ENCODE measurements at regions of chr3 and their contacts with region 1.

Region 1: GRCh38 chr3:127959846-127960245 is 44.8 kb downstream of the KBTBD12 start:
- DNase-seq: no peak
- H3K4me3 ChIP-seq: no peak overlapping the region
- CTCF ChIP-seq: peak; percentile 40

Region 2: DNA sequence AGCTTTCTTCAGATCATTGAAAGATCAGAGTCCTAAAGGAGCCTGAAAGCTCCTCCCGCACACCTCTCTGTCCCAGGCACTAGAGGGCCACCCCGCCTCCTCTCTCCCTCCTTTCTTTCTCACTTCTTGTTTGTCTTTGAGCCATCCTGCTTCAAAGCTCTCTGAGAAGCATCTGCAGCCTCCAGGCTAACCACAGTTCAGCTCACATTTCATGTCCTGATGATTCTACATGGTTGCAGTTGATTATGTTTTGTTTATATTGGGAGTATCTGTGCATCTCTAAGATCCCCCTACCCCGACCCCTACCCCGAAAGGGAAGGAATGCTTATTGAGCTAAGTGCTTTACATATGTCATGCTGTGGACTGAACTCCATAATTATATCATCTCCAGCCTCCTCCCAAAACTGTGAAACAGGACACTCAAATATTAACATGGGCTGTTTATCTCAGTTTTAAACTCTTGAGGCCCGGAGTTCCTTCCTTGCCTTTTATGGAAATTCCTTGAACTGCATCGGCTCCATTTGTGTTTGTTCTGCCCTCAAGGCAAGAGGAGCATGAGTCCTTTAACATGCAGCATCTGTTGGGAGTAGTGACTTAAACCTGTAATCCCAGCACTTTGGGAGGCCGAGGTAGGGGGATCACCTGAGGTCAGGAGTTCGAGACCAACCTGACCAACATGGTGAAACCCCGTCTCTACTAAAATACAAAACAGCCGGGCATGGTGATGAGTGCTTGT is 168.5 kb before region 1 on chr3:
- in situ Hi-C with region 1: no loop called
- DNase-seq: peak; percentile 65
- H3K4me3 ChIP-seq: no peak overlapping the region
- CTCF ChIP-seq: peak; percentile 44

Region 3: DNA sequence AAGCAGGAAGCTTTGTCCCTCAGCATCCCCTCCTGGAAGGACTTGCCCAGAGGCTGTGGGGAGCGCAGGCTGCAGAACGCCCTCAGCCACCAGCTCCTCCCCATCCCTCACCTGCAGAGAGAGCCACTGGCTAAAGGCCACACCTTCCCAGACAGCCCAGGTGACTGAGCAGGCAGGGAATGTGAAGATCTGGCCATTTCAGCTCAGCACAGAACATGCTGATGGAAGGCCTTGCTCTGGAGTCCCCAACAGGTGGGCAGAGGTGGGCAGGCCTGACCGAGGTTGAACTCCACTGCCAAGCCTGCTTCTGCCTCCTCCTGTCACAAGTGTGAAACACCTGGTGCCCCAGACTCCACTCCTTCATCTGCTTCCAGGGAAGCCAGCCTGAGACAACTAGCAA is 41.7 kb after region 1 on chr3:
- in situ Hi-C with region 1: loop called (anchors 5 kb)
- DNase-seq: no peak
- H3K4me3 ChIP-seq: no peak overlapping the region
- CTCF ChIP-seq: no peak

Region 4: DNA sequence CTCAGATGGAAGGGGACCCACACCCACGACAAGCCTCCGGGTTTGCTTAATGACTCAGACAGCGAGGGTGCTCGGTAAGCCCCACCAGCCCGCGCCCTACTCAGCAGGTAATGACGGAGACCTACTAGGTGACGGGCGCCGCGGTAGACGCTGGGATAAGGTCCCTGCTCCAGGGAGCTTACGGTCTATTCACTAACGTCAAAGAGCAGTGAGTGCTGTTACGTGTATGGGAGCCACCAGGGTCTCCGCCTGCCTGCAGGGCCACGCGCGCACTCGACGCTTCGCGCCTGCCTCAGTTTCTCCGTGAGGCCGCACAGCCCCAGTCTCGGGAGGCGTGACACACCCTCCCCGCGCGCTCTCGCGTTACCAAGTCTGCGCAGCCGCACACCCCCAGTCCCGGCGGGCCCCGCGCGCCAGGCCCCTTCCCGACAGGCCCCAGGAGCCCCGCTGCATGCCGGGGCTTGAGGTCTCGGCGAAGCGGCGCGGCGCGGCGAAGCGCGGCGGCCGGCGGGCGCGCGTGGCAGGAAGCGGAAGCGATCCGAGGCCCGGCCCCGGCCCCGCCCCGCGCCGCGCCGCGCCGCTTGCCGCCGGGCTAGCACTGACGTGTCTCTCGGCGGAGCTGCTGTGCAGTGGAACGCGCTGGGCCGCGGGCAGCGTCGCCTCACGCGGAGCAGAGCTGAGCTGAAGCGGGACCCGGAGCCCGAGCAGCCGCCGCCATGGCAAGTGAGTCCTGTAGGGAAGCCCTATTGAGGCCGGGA is 92.2 kb after region 1 on chr3 and contains the start of gene SEC61A1:
- in situ Hi-C with region 1: loop called (anchors 5 kb)
- DNase-seq: peak; percentile 81
- H3K4me3 ChIP-seq: peak within 1 kb of the TSS; percentile 97
- CTCF ChIP-seq: no peak